Psoas muscle (tissue), 8 donors: ENCODE measurements at regions of chr7 and their contacts with region 1.

Region 1: GRCh38 chr7:43602271-43602670 is 19.4 kb downstream of the STK17A start:
- DNase-seq: no peak
- ATAC-seq: no peak
- H3K4me3 ChIP-seq: no peak overlapping the region
- H3K27ac ChIP-seq: no peak overlapping the region
- H3K4me1 ChIP-seq: no peaks in the 10 kb centered on the region
- H3K27me3 ChIP-seq: no peaks in the 10 kb centered on the region
- CTCF ChIP-seq: no peak

Region 2: GRCh38 chr7:43639858-43640491 is 37.7 kb after region 1 on chr7:
- intact Hi-C with region 1: loop called in 1 of 2 experiments (anchors 5 kb)
- DNase-seq: no peak
- ATAC-seq: peak in 3 of 4 donors; percentile 34 to 55 (median 38)
- H3K4me3 ChIP-seq: no peak overlapping the region
- H3K27ac ChIP-seq: no peak overlapping the region
- H3K4me1 ChIP-seq: peaks cover 3% of the 10 kb centered on the region
- H3K27me3 ChIP-seq: no peaks in the 10 kb centered on the region
- CTCF ChIP-seq: no peak